ENCODE measurements at regions of chr15 and their contacts with region 1.

Region 1: GRCh38 chr15:57866149-57866736 is 159.7 kb downstream of the POLR2M start:
- DNase-seq: peak; percentile 32 to 75 (median 60)
- H3K4me3 ChIP-seq: no peak overlapping the region
- H3K27ac ChIP-seq: no peak overlapping the region
- H3K4me1 ChIP-seq: no peaks in the 10 kb centered on the region
- H3K27me3 ChIP-seq: peaks cover 27% of the 10 kb centered on the region
- CTCF ChIP-seq: peak; percentile 26 to 61 (median 53)
- POLR2A ChIP-seq: no peak

Region 2: DNA sequence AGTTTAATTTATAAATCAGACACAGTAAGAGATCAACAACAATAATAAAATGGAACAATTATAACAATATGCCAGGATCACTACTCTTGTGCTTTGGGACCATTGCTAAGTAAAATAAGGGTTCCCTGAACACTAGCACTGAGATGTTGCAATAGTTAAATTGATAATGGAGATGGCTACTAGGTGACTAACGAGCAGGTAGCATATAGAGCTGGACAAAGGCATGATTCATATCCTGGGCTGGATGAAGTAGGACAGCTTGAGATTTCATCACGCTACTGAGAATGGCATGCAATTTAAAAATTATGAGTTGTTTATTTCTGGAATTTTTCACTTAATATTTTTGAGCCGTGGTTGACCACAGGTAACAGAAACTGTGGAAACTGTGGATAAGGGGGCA is 295.2 kb before region 1 on chr15:
- intact Hi-C with region 1: loop called in 1 of 2 experiments (anchors 10 kb)
- DNase-seq: no peak
- H3K4me3 ChIP-seq: no peak overlapping the region
- H3K27ac ChIP-seq: no peak overlapping the region
- H3K4me1 ChIP-seq: peaks cover 0 to 3% of the 10 kb centered on the region in 2 donors
- H3K27me3 ChIP-seq: no peaks in the 10 kb centered on the region
- CTCF ChIP-seq: no peak
- POLR2A ChIP-seq: no peak

Region 3: DNA sequence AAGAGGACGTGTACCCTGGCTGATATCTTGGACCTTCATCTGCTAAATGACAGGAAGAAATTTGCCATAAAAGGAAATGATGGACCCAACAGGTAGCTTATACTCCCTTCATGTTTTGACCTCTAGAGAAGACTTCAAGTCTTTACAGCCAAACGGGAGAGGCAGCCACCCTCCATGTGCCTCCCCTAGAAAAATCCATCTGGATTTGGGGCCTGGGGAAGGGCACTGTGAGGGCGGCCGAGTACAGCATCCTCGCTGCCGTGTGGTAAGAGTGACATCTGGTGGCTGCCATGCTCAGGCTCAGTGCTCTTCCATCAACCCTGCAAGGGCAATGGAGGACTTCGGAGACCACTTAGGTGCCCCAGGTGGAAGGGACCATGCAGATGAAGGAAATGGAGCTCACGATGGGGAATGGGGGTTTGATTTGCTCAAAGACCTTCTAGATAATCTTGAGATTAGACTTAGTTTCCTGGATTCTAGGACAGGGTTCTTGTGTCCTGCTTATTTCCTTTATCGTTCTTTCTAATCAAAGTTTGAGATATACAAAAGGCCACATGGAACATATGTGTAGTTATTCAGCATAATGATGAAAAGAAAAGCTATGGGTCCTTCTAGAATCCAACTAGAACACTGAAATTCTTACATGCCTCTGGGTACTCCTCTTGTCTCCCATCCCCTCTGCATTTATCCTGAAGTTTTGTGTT is 316.4 kb after region 1 on chr15:
- intact Hi-C with region 1: loop called in 1 of 2 experiments (anchors 10 kb)
- DNase-seq: peak in 6 of 7 donors; percentile 20 to 56 (median 44)
- H3K4me3 ChIP-seq: no peak overlapping the region
- H3K27ac ChIP-seq: no peak overlapping the region
- H3K4me1 ChIP-seq: no peaks in the 10 kb centered on the region
- H3K27me3 ChIP-seq: no peaks in the 10 kb centered on the region
- CTCF ChIP-seq: peak; percentile 39 to 85 (median 73)
- POLR2A ChIP-seq: no peak

Measured in adrenal gland (tissue), 19 donors.